ENCODE measurements at regions of chr3 and their contacts with region 1.

Region 1: GRCh38 chr3:71583566-71584449 is at the start of gene FOXP1:
- DNase-seq: peak; percentile 70 to 92 (median 91)
- ATAC-seq: peak; percentile 72 to 80
- H3K4me3 ChIP-seq: peak within 1 kb of the TSS; percentile 85
- H3K27ac ChIP-seq: peak within 1 kb of the TSS; percentile 98
- H3K4me1 ChIP-seq: no peaks in the 10 kb centered on the region
- H3K27me3 ChIP-seq: no peaks in the 10 kb centered on the region
- total RNA-seq, gene FOXP1: 57.4 to 63.4 (median 58.6) TPM

Region 2: GRCh38 chr3:70550723-70551319 is 1033.0 kb before region 1 on chr3:
- intact Hi-C with region 1: loop called in 1 of 4 experiments (anchors 5 kb)
- DNase-seq: peak; percentile 62 to 85 (median 84)
- ATAC-seq: peak; percentile 75 to 89
- H3K4me3 ChIP-seq: no peak overlapping the region
- H3K27ac ChIP-seq: no peak overlapping the region
- H3K4me1 ChIP-seq: no peaks in the 10 kb centered on the region
- H3K27me3 ChIP-seq: no peaks in the 10 kb centered on the region

Region 3: GRCh38 chr3:71006810-71007785 is 576.7 kb before region 1 on chr3:
- intact Hi-C with region 1: loop called in 1 of 4 experiments (anchors 10 kb)
- DNase-seq: peak in 1 of 3 donors; percentile 12
- ATAC-seq: peak; percentile 61 to 64
- H3K4me3 ChIP-seq: no peak overlapping the region
- H3K27ac ChIP-seq: no peak overlapping the region
- H3K4me1 ChIP-seq: no peaks in the 10 kb centered on the region
- H3K27me3 ChIP-seq: no peaks in the 10 kb centered on the region

Region 4: GRCh38 chr3:71069797-71070196 is 514.0 kb before region 1 on chr3:
- intact Hi-C with region 1: loop called in 2 of 4 experiments (anchors 5 to 10 kb)
- DNase-seq: peak; percentile 73 to 87 (median 76)
- ATAC-seq: peak; percentile 78 to 88
- H3K4me3 ChIP-seq: no peak overlapping the region
- H3K27ac ChIP-seq: no peak overlapping the region
- H3K4me1 ChIP-seq: peaks cover 9% of the 10 kb centered on the region
- H3K27me3 ChIP-seq: no peaks in the 10 kb centered on the region

Region 5: GRCh38 chr3:71247221-71247976 is 336.4 kb before region 1 on chr3:
- intact Hi-C with region 1: loop called in 1 of 4 experiments (anchors 5 kb)
- DNase-seq: peak in 2 of 3 donors; percentile 53 to 65
- ATAC-seq: peak; percentile 34 to 52
- H3K4me3 ChIP-seq: no peak overlapping the region
- H3K27ac ChIP-seq: peak overlapping the region; percentile 84
- H3K4me1 ChIP-seq: peaks cover 7% of the 10 kb centered on the region
- H3K27me3 ChIP-seq: no peaks in the 10 kb centered on the region

Region 6: GRCh38 chr3:71305231-71306206 is 278.3 kb before region 1 on chr3:
- intact Hi-C with region 1: loop called in 2 of 4 experiments (anchors 5 kb)
- DNase-seq: peak in 1 of 3 donors; percentile 35
- ATAC-seq: peak; percentile 89 to 90
- H3K4me3 ChIP-seq: peak overlapping the region; percentile 64
- H3K27ac ChIP-seq: peak overlapping the region; percentile 67
- H3K4me1 ChIP-seq: peaks cover 4% of the 10 kb centered on the region
- H3K27me3 ChIP-seq: no peaks in the 10 kb centered on the region

Region 7: DNA sequence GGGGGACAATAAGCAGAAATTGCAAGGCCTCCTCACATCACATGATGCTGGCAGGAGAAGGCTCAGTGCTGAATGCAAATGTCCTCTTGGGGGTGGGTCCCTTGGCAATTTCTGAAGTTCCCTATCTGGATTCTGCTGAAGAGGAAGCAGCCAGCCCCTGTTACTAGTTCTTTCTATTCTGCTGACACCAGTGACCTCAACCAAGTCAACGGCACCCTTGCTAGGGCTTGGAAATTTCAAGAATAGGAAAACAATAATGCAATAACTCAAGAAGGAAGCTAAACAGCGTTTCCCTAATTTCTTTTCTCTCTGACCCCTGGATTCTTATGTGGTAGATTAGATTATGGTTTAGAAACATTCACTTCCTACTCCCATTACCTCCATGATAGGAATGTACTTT is 45.9 kb after region 1 on chr3:
- intact Hi-C with region 1: no loop called
- DNase-seq: peak; percentile 23 to 48 (median 47)
- ATAC-seq: peak in 1 of 2 donors; percentile 51
- H3K4me3 ChIP-seq: no peak overlapping the region
- H3K27ac ChIP-seq: no peak overlapping the region
- H3K4me1 ChIP-seq: no peaks in the 10 kb centered on the region
- H3K27me3 ChIP-seq: no peaks in the 10 kb centered on the region

Region 8: DNA sequence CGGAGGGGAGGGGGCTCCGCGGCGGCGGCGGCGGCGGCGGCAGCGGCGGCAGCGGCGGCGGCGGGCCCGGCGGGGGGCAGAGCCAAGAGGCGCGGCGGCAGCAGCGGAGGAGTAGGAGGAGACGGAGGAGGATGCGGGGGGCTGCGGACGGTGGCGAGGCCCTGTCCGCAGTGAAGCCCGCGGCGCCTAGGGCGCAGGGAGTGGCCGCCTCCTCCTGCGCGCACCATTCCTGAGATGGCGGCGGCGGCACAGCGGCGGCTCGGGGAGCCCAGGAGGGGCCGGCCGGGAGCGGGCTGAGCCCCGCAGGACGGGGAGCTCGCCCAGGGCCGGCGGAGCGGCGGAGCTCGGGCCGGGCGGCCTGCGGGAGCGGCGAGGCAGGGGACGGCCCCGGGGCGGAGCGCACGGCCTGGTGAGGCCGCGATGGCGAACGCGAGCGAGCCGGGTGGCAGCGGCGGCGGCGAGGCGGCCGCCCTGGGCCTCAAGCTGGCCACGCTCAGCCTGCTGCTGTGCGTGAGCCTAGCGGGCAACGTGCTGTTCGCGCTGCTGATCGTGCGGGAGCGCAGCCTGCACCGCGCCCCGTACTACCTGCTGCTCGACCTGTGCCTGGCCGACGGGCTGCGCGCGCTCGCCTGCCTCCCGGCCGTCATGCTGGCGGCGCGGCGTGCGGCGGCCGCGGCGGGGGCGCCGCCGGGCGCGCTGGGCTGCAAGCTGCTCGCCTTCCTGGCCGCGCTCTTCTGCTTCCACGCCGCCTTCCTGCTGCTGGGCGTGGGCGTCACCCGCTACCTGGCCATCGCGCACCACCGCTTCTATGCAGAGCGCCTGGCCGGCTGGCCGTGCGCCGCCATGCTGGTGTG is 170.0 kb after region 1 on chr3 and contains the start of gene GPR27:
- intact Hi-C with region 1: no loop called
- DNase-seq: peak; percentile 32 to 64 (median 60)
- ATAC-seq: peak; percentile 66 to 73
- H3K4me3 ChIP-seq: peak within 1 kb of the TSS; percentile 81
- H3K27ac ChIP-seq: no peak within 1 kb of the TSS
- H3K4me1 ChIP-seq: no peaks in the 10 kb centered on the region
- H3K27me3 ChIP-seq: no peaks in the 10 kb centered on the region
- total RNA-seq, gene GPR27: 0.97 to 5.4 (median 2.9) TPM